B cell (primary cell): ENCODE measurements at regions of chr13 and their contacts with region 1.

Region 1: DNA sequence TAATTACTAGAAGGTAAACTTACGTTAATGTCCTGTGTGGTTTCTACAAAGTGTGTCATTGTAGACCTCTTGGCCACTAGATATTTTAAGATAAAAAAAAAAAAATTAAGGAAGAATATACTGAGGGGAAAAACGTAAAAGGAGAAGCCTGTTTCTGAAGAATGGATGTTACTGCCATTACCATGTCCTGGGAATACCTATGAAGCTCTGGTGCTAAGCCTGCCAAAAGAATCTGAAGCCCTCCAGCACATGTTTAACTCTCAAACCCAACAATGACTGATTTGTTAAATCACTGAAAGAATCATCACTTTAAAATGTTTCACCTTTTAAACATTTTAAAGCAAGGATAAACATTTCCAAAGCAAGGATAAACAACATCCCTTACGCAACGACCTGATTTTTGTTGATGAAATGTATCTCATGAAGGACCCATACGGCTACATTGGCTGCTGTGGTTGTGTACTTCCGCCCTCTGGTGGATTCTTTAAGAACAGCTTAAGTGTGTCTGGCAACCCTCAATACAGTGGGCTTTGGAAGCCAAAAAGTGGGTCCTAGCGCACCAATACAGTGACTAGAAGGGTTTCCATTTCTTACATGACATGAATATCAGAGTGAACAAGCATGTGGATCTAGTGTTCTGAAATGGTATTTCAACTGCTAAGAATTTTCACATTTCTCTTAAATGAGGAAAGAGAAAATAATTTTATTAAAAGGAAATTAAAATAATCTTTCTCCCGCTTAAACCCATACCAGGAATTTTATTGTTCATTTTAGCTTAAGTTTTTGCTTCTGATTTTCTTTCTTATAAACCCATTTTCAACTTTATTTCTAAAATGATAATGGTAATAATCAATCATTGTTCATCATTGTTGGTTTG is 74.5 kb upstream of the RAP2A start:
- DNase-seq: peak; percentile 76
- ATAC-seq: peak; percentile 85
- H3K4me3 ChIP-seq: no peak overlapping the region
- H3K4me3 Mint-ChIP-seq: no peak overlapping the region
- H3K27ac ChIP-seq: no peak overlapping the region
- H3K27ac Mint-ChIP-seq: no peak overlapping the region
- H3K4me1 ChIP-seq: no peaks in the 10 kb centered on the region
- H3K4me1 Mint-ChIP-seq: no peaks in the 10 kb centered on the region
- H3K27me3 ChIP-seq: no peaks in the 10 kb centered on the region
- H3K27me3 Mint-ChIP-seq: no peaks in the 10 kb centered on the region
- CTCF ChIP-seq: peak; percentile 88

Region 2: GRCh38 chr13:96662036-96662435 is 697.4 kb before region 1 on chr13:
- CTCF ChIA-PET with region 1: no interaction called
- POLR2A ChIA-PET with region 1: no interaction called
- intact Hi-C with region 1: no loop called
- DNase-seq: no peak
- ATAC-seq: no peak
- H3K4me3 ChIP-seq: no peak overlapping the region
- H3K4me3 Mint-ChIP-seq: no peak overlapping the region
- H3K27ac ChIP-seq: no peak overlapping the region
- H3K27ac Mint-ChIP-seq: no peak overlapping the region
- H3K4me1 ChIP-seq: no peaks in the 10 kb centered on the region
- H3K4me1 Mint-ChIP-seq: no peaks in the 10 kb centered on the region
- H3K27me3 ChIP-seq: no peaks in the 10 kb centered on the region
- H3K27me3 Mint-ChIP-seq: no peaks in the 10 kb centered on the region
- CTCF ChIP-seq: no peak

Region 3: DNA sequence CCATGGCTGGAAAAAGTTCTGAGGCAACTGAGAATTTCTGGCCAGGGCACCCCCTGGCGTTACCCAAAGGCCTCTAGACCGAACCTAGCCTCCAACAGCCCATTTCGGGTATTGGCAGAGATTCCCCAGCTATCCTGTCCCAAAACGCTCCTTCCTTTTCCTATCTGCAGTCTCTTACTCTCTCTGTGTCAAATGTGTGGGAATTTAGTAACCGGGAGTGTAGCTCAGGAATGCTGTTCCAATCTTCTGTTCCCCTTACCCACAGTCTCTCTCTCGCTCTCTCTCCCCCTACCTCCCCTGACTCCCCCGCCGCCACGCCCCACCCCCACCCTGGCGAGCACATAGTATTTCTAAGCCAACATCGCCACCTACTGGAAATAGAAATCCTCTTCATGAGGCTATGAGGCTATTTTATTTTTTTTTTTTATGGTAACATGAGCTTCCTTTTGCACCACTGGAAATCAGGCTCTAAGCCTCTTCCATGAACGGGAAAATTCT is 392.1 kb before region 1 on chr13:
- CTCF ChIA-PET with region 1: no interaction called
- POLR2A ChIA-PET with region 1: no interaction called
- intact Hi-C with region 1: no loop called
- DNase-seq: no peak
- ATAC-seq: no peak
- H3K4me3 ChIP-seq: no peak overlapping the region
- H3K4me3 Mint-ChIP-seq: no peak overlapping the region
- H3K27ac ChIP-seq: no peak overlapping the region
- H3K27ac Mint-ChIP-seq: no peak overlapping the region
- H3K4me1 ChIP-seq: no peaks in the 10 kb centered on the region
- H3K4me1 Mint-ChIP-seq: no peaks in the 10 kb centered on the region
- H3K27me3 ChIP-seq: no peaks in the 10 kb centered on the region
- H3K27me3 Mint-ChIP-seq: no peaks in the 10 kb centered on the region
- CTCF ChIP-seq: no peak

Region 4: GRCh38 chr13:97018029-97018831 is 341.2 kb before region 1 on chr13:
- CTCF ChIA-PET with region 1: interaction called, 10 read pairs
- POLR2A ChIA-PET with region 1: no interaction called
- intact Hi-C with region 1: loop called (anchors 1 kb)
- DNase-seq: peak; percentile 46
- ATAC-seq: no peak
- H3K4me3 ChIP-seq: no peak overlapping the region
- H3K4me3 Mint-ChIP-seq: no peak overlapping the region
- H3K27ac ChIP-seq: no peak overlapping the region
- H3K27ac Mint-ChIP-seq: no peak overlapping the region
- H3K4me1 ChIP-seq: no peaks in the 10 kb centered on the region
- H3K4me1 Mint-ChIP-seq: peaks cover 2% of the 10 kb centered on the region
- H3K27me3 ChIP-seq: peaks cover 0 to 12% (median 4%) of the 10 kb centered on the region in 4 experiments
- H3K27me3 Mint-ChIP-seq: peaks cover 17% of the 10 kb centered on the region
- CTCF ChIP-seq: peak; percentile 94

Region 5: GRCh38 chr13:97344265-97345175 is 14.9 kb before region 1 on chr13:
- CTCF ChIA-PET with region 1: interaction called, 14 read pairs
- POLR2A ChIA-PET with region 1: no interaction called
- intact Hi-C with region 1: no loop called
- DNase-seq: peak; percentile 32
- ATAC-seq: no peak
- H3K4me3 ChIP-seq: no peak overlapping the region
- H3K4me3 Mint-ChIP-seq: no peak overlapping the region
- H3K27ac ChIP-seq: no peak overlapping the region
- H3K27ac Mint-ChIP-seq: no peak overlapping the region
- H3K4me1 ChIP-seq: no peaks in the 10 kb centered on the region
- H3K4me1 Mint-ChIP-seq: no peaks in the 10 kb centered on the region
- H3K27me3 ChIP-seq: no peaks in the 10 kb centered on the region
- H3K27me3 Mint-ChIP-seq: no peaks in the 10 kb centered on the region
- CTCF ChIP-seq: peak; percentile 52